ENCODE measurements at regions of chr17 and their contacts with region 1.

Region 1: GRCh38 chr17:50919321-50920085 is 53.3 kb upstream of the TOB1 start:
- DNase-seq: peak; percentile 86
- ATAC-seq: peak; percentile 74
- H3K4me3 ChIP-seq: peak overlapping the region in 2 of 3 experiments; percentile 31 to 65; a peak in 3 of 6 replicates
- H3K27ac ChIP-seq: peak overlapping the region; percentile 5
- H3K4me1 ChIP-seq: peaks cover 100% of the 10 kb centered on the region
- H3K27me3 ChIP-seq: 0 out of 5 replicates have a peak, but pooled peaks cover 0 to 2% of the 10 kb centered on the region in 2 experiments
- CTCF ChIP-seq: peak; percentile 19
- EP300 ChIP-seq: no peak
- POLR2A ChIP-seq: no peak
- RAD21 ChIP-seq: 0 out of 2 replicates have a peak, but pooled peaks have one; percentile 9

Region 2: DNA sequence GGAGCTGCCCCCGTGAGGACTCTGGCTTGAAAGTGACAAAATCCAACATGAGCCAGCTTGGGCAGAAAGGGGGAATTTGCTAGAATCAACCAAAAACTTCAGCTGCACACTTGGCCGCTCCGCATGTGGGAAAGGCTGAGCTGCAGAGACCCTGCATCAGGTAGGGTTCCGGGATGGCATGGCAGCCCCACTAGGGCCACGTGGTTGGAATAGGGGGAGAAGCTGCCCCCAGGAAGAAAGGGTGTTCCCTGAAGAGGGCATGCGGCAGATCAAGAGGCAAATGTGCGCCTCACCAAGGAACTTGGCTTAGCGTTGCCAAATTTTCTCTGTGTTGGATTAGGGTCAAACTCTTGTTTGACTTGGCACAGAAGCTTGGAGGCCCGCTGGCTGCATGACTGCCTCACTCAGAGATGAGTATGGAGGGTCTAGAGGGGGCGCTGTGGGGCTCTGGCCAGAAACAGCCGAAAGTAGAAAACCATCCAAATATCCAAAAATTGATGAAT is 113.3 kb before region 1 on chr17:
- CTCF ChIA-PET with region 1: no interaction called
- POLR2A ChIA-PET with region 1: no interaction called
- in situ Hi-C with region 1: no loop called
- intact Hi-C with region 1: no loop called
- DNase-seq: peak; percentile 73
- ATAC-seq: peak; percentile 70
- H3K4me3 ChIP-seq: peak overlapping the region in 1 of 3 experiments; percentile 29; a peak in 1 of 6 replicates
- H3K27ac ChIP-seq: peak overlapping the region; percentile 15
- H3K4me1 ChIP-seq: peaks cover 83% of the 10 kb centered on the region
- H3K27me3 ChIP-seq: peaks cover 2 to 9% of the 10 kb centered on the region in 2 experiments; a peak in 3 of 5 replicates
- CTCF ChIP-seq: peak; percentile 74
- EP300 ChIP-seq: peak in 1 of 2 experiments; percentile 75; a peak in 1 of 4 replicates
- POLR2A ChIP-seq: no peak
- RAD21 ChIP-seq: peak; percentile 30; the same call in 1 of the 2 replicates

Region 3: DNA sequence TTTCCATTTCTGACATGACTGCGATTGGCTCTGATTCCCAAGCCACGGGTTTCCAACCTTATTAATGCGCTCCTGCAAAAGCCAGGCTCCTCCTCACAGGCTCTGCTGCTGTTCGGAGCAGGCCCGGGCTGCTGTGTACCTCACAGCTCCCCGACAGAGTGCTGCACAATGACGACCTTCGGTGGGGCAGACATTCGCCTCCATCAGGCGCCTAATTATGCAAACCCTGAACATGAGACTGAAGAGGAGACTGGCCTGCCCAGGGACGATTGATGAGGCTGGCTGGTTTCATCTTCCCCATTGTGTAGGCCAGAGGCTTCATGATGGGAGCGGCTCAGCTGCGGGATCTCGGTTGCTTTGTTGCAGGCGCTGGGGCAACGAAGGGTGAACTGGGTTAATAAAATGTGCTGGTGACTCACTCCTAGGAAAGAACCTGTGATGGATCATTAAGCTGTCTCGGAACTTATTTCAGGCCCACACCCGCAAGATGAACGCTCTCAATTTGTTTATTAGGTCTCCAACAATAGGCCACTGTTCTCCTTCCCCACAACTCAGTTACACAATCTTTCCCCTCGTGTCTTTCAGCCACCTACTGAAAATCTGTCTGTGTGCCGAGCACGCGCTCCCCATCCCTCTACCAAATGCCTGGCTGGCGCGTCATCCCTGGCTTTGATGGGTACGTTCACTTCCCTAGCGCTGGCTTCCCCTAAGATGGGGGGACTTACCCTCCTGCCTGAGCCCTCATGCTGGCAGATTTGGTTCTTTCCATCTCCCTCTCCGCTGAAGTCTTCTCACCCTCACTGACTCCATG is 26.1 kb before region 1 on chr17:
- CTCF ChIA-PET with region 1: no interaction called
- POLR2A ChIA-PET with region 1: interaction called, 12 read pairs
- in situ Hi-C with region 1: no loop called
- intact Hi-C with region 1: no loop called
- DNase-seq: peak; percentile 90
- ATAC-seq: peak; percentile 51
- H3K4me3 ChIP-seq: peak overlapping the region; percentile 52 to 72 (median 62)
- H3K27ac ChIP-seq: peak overlapping the region; percentile 84
- H3K4me1 ChIP-seq: peaks cover 81% of the 10 kb centered on the region
- H3K27me3 ChIP-seq: no peaks in the 10 kb centered on the region
- CTCF ChIP-seq: no peak
- EP300 ChIP-seq: peak in 1 of 2 experiments; percentile 86; a peak in 2 of 4 replicates
- POLR2A ChIP-seq: peak in 1 of 2 experiments; percentile 51; a peak in 2 of 4 replicates
- RAD21 ChIP-seq: no peak

Region 4: DNA sequence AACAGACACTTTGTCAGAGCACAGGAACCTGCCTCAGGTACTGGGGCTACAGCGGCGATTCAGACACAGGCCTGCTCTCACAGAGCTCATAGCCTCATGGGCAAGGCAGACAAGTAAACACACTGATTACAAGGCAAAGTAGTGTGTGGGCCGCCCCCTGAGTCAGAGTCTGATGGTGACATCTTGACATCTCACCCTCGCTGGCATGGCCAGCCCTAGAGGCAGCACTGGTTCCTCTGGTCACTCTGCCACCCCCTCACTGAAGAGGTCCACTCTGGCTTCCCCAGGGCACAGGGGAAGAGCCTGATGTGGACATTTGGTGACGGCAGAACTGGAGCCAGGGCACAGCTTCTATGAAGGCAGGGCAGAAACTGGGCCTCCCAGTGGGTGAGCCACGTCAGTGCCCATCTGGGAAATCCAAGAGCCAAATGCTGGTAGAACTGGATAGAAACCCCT is 20.5 kb before region 1 on chr17:
- CTCF ChIA-PET with region 1: no interaction called
- POLR2A ChIA-PET with region 1: interaction called, 145 read pairs
- in situ Hi-C with region 1: no loop called
- intact Hi-C with region 1: no loop called
- DNase-seq: peak; percentile 88
- ATAC-seq: peak; percentile 93
- H3K4me3 ChIP-seq: peak overlapping the region in 1 of 3 experiments; percentile 35; a peak in 3 of 6 replicates
- H3K27ac ChIP-seq: peak overlapping the region; percentile 44
- H3K4me1 ChIP-seq: peaks cover 77% of the 10 kb centered on the region
- H3K27me3 ChIP-seq: no peaks in the 10 kb centered on the region
- CTCF ChIP-seq: peak; percentile 33; the same call in 1 of the 2 replicates
- EP300 ChIP-seq: 0 out of 4 replicates have a peak, but pooled peaks of 1 of the 2 experiments have one; percentile 51
- POLR2A ChIP-seq: no peak
- RAD21 ChIP-seq: no peak

Region 5: GRCh38 chr17:50931144-50931908 is 11.8 kb after region 1 on chr17:
- CTCF ChIA-PET with region 1: no interaction called
- POLR2A ChIA-PET with region 1: interaction called, 28 read pairs
- in situ Hi-C with region 1: no loop called
- intact Hi-C with region 1: loop called (anchors 1 kb)
- DNase-seq: peak; percentile 77
- ATAC-seq: peak; percentile 89
- H3K4me3 ChIP-seq: peak overlapping the region; percentile 60 to 85 (median 76)
- H3K27ac ChIP-seq: peak overlapping the region; percentile 77
- H3K4me1 ChIP-seq: peaks cover 74% of the 10 kb centered on the region
- H3K27me3 ChIP-seq: peaks cover 1 to 13% of the 10 kb centered on the region in 2 experiments; a peak in 2 of 5 replicates
- CTCF ChIP-seq: no peak
- EP300 ChIP-seq: no peak
- POLR2A ChIP-seq: 0 out of 4 replicates have a peak, but pooled peaks have one; percentile 35 to 55
- RAD21 ChIP-seq: no peak

Measured in HepG2 (cell line).